CD8-positive, alpha-beta T cell (primary cell): ENCODE measurements at regions of chr10 and their contacts with region 1.

Region 1: DNA sequence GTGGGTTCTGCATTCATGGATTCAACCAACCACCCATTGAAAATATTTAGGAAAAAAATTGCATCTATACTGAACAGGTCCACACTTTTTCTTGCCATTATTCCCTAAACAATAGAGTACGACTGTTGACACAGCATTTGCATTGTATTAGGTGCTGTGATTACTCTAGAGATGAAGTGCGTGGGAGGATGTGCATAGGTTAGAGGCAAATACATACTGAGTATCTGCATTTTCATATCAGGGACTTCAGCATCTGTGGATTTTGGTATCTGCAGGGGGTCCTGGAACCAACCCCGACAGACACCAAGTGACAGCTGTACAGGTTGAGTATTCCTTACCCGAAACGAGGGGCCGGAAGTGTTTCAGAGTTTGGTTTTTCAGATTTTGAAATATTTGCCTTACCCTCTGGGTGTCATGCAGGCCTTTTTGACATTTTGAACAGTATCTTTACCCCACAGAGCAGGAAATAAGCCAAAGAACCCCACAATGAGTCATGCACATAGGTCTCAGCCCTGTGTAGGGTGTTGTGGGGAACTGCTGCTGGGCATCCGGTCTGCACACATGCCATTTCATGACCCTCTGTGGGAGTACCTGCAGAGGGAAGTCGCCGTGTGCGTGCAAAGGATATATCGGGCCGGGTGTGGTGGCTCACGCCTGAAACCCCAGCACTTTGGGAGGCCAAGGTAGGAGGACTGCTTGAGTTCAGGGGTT is 14.5 kb downstream of the NUDT5 start:
- DNase-seq: peak; percentile 34 to 91 (median 71)
- ATAC-seq: peak; percentile 98
- H3K4me3 ChIP-seq: no peak overlapping the region
- H3K4me3 Mint-ChIP-seq: peak overlapping the region; percentile 60
- H3K27ac ChIP-seq: peak overlapping the region; percentile 46 to 53
- H3K27ac Mint-ChIP-seq: peak overlapping the region; percentile 95
- H3K4me1 ChIP-seq: peaks cover 13% of the 10 kb centered on the region
- H3K4me1 Mint-ChIP-seq: peaks cover 27% of the 10 kb centered on the region
- H3K27me3 ChIP-seq: no peaks in the 10 kb centered on the region
- H3K27me3 Mint-ChIP-seq: no peaks in the 10 kb centered on the region
- CTCF ChIP-seq: no peak

Region 2: GRCh38 chr10:12129222-12130111 is 51.8 kb before region 1 on chr10 and contains the start of gene SEC61A2:
- CTCF ChIA-PET with region 1: no interaction called
- POLR2A ChIA-PET with region 1: no interaction called
- intact Hi-C with region 1: loop called in 1 of 2 experiments (anchors 1 kb)
- DNase-seq: peak; percentile 92 to 99 (median 98)
- ATAC-seq: peak; percentile 89
- H3K4me3 ChIP-seq: peak within 1 kb of the TSS; percentile 61 to 78
- H3K4me3 Mint-ChIP-seq: peak within 1 kb of the TSS; percentile 90
- H3K27ac ChIP-seq: peak within 1 kb of the TSS; percentile 71 to 72
- H3K27ac Mint-ChIP-seq: peak within 1 kb of the TSS; percentile 90
- H3K4me1 ChIP-seq: peaks cover 9% of the 10 kb centered on the region
- H3K4me1 Mint-ChIP-seq: peaks cover 17% of the 10 kb centered on the region
- H3K27me3 ChIP-seq: no peaks in the 10 kb centered on the region
- H3K27me3 Mint-ChIP-seq: no peaks in the 10 kb centered on the region
- CTCF ChIP-seq: no peak
- total RNA-seq, gene SEC61A2: 10.2 to 14.5 TPM

Region 3: GRCh38 chr10:12279281-12279680 is 98.1 kb after region 1 on chr10:
- CTCF ChIA-PET with region 1: no interaction called
- POLR2A ChIA-PET with region 1: no interaction called
- intact Hi-C with region 1: no loop called
- DNase-seq: no peak
- ATAC-seq: no peak
- H3K4me3 ChIP-seq: no peak overlapping the region
- H3K4me3 Mint-ChIP-seq: no peak overlapping the region
- H3K27ac ChIP-seq: no peak overlapping the region
- H3K27ac Mint-ChIP-seq: no peak overlapping the region
- H3K4me1 ChIP-seq: no peaks in the 10 kb centered on the region
- H3K4me1 Mint-ChIP-seq: no peaks in the 10 kb centered on the region
- H3K27me3 ChIP-seq: no peaks in the 10 kb centered on the region
- H3K27me3 Mint-ChIP-seq: no peaks in the 10 kb centered on the region
- CTCF ChIP-seq: no peak